CD4-positive, alpha-beta memory T cell (primary cell): ENCODE measurements at regions of chr9 and their contacts with region 1.

Region 1: DNA sequence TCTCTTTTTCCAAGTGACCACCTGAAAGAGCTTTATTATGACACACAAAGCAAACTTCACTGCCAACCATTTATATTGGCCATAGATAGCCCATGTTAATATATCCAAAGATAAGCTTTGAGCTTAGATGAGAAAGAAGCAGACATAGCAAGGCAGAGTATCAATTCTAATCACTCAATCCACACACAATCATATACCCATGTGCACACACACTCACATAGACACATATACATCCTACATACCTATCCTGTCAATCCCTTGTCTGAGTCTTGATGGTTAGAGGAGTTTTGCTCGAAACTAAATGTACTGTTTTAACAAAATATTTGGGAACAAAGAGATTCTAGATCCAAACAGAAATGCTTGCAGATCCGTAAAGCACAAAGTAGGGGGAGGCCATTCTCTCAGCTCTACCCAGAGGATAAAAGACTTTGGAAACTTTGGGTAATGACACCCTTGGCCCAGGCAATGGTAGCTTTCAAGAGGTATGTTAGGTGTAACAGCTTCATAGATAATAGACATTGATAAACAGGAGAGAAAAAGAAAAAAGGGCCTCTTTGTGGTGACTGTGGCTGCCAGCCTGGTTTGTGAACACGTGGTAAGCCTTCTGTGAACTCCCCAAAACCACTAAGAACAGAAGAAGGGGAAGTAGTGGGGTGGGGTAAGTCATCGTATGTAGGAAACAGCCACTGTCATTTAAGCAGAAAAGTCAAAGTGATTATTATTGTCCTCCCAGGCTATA is 121.6 kb downstream of the TLR4 start:
- DNase-seq: peak; percentile 61 to 77 (median 66)
- H3K4me3 ChIP-seq: no peak overlapping the region
- H3K4me3 Mint-ChIP-seq: peak overlapping the region in 7 of 8 donors; percentile 15 to 67 (median 50)
- H3K27ac ChIP-seq: no peak overlapping the region
- H3K27ac Mint-ChIP-seq: peak overlapping the region in 4 of 7 donors; percentile 20 to 62 (median 44)
- H3K4me1 ChIP-seq: peaks cover 31% of the 10 kb centered on the region
- H3K4me1 Mint-ChIP-seq: peaks cover 23 to 40% (median 27%) of the 10 kb centered on the region in 4 donors
- H3K27me3 ChIP-seq: no peaks in the 10 kb centered on the region
- H3K27me3 Mint-ChIP-seq: peaks cover 6 to 16% of the 10 kb centered on the region in 2 donors

Region 2: GRCh38 chr9:117782931-117783788 is 42.6 kb before region 1 on chr9:
- CTCF ChIA-PET with region 1: no interaction called
- POLR2A ChIA-PET with region 1: interaction called, 4 read pairs
- intact Hi-C with region 1: loop called (anchors 1 kb)
- DNase-seq: peak; percentile 50 to 67 (median 62)
- H3K4me3 ChIP-seq: peak overlapping the region; percentile 4 to 25
- H3K4me3 Mint-ChIP-seq: no peak overlapping the region
- H3K27ac ChIP-seq: no peak overlapping the region
- H3K27ac Mint-ChIP-seq: no peak overlapping the region
- H3K4me1 ChIP-seq: peaks cover 15% of the 10 kb centered on the region
- H3K4me1 Mint-ChIP-seq: peaks cover 0 to 4% (median 3%) of the 10 kb centered on the region in 4 donors
- H3K27me3 ChIP-seq: no peaks in the 10 kb centered on the region
- H3K27me3 Mint-ChIP-seq: no peaks in the 10 kb centered on the region